Dorsolateral prefrontal cortex (tissue), 120 donors: ENCODE measurements at regions of chr4 and their contacts with region 1.

Region 1: DNA sequence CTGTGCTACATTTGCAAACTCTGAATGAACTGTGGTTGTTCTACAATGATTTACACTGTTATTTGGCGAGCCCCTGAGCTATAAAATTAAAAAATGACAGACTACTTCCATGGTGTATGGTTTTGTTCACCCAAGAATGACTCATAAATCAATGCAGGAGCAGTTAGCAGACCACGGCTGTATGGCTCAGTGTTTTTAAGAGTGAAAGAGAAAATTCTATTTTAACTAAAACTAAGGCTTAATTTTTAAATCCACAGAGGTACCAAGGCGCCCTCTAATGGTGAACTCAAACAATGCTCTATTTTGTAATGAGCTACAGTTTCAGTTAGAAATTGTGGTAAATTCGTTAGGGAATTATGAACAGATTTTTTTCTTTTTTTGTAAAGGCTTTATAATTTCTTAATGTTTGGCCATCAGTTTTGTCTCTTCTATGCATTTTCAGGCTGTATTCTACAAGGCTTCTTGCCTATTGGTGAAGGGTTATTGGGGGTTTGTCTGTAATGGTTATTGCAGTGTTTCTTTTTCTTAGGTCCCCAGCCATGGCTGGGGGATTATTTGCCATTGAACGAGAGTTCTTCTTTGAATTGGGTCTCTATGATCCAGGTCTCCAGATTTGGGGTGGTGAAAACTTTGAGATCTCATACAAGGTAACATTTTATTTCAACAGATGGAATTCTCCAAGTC is 32.5 kb downstream of the HMGB2 start:
- DNase-seq: no peak
- H3K4me3 ChIP-seq: no peak overlapping the region
- H3K27ac ChIP-seq: peak overlapping the region in 3 of 59 donors; percentile 14 to 25 (median 21)
- H3K27me3 ChIP-seq: no peaks in the 10 kb centered on the region
- CTCF ChIP-seq: peak; percentile 63 to 90 (median 78)

Region 2: GRCh38 chr4:173013232-173013930 is 288.3 kb before region 1 on chr4:
- intact Hi-C with region 1: loop called in 1 of 2 experiments (anchors 2 kb)
- DNase-seq: peak in 2 of 10 donors; percentile 51 to 59
- H3K4me3 ChIP-seq: no peak overlapping the region
- H3K27ac ChIP-seq: peak overlapping the region in 4 of 59 donors; percentile 22 to 75 (median 26)
- H3K27me3 ChIP-seq: no peaks in the 10 kb centered on the region
- CTCF ChIP-seq: peak; percentile 62 to 88 (median 77)